ENCODE measurements at regions of chr12 and their contacts with region 1.

Region 1: GRCh38 chr12:10001171-10001776 is 2.4 kb upstream of the CLEC1B start:
- DNase-seq: no peak
- ATAC-seq: no peak
- H3K4me3 ChIP-seq: no peak overlapping the region
- H3K27ac ChIP-seq: no peak overlapping the region
- H3K4me1 ChIP-seq: no peaks in the 10 kb centered on the region
- H3K27me3 ChIP-seq: peaks cover 24% of the 10 kb centered on the region
- CTCF ChIP-seq: no peak

Region 2: GRCh38 chr12:9756170-9756569 is 245.1 kb before region 1 on chr12:
- CTCF ChIA-PET with region 1: no interaction called
- POLR2A ChIA-PET with region 1: interaction called, 12 read pairs
- intact Hi-C with region 1: no loop called
- DNase-seq: no peak
- ATAC-seq: no peak
- H3K4me3 ChIP-seq: no peak overlapping the region
- H3K27ac ChIP-seq: no peak overlapping the region
- H3K4me1 ChIP-seq: no peaks in the 10 kb centered on the region
- H3K27me3 ChIP-seq: peaks cover 4% of the 10 kb centered on the region; the same call in 1 of the 2 replicates
- CTCF ChIP-seq: no peak

Region 3: DNA sequence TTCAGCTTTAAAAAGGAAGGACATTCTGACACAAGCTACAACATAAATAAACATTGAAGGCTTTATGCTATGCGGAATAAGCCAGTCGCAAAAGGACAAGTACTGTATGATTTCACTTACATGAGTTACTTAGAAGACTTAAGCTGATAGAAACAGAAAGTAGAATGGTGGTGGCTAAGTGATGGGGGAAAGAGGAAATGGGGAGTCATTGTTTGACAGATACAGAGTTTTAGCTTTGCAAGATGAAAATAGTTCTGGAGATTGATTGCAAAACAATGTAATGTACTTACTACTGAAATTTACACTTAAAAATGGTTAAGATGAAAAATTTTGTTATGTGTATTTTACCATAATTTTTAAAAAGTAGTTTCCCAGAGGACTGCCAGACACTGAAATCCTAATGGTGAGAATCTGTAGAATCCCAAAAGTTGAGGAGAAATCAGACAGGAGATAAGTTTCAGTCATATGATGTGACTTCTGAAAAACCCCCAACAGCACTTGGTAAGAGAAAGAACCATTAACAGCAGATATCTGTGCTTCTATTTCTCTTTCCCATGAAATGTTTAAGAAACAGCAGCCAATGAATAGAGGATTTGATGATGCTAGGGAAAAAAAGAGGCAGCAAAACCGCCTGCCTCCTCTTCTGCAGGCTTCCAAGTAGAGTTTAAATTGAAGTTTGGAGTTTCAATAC is 52.5 kb before region 1 on chr12:
- CTCF ChIA-PET with region 1: no interaction called
- POLR2A ChIA-PET with region 1: no interaction called
- intact Hi-C with region 1: loop called (anchors 10 kb)
- DNase-seq: no peak
- ATAC-seq: no peak
- H3K4me3 ChIP-seq: no peak overlapping the region
- H3K27ac ChIP-seq: no peak overlapping the region
- H3K4me1 ChIP-seq: no peaks in the 10 kb centered on the region
- H3K27me3 ChIP-seq: peaks cover 6% of the 10 kb centered on the region; the same call in 1 of the 2 replicates
- CTCF ChIP-seq: no peak

Measured in PC-3 (cell line).